Activated B cell treated with CpG ODN at 0.5 μM for 24 hours (primary cell): ENCODE measurements at regions of chr16 and their contacts with region 1.

Region 1: GRCh38 chr16:57413301-57413730 is 8.7 kb downstream of the CCL17 start:
- DNase-seq: peak; percentile 52
- ATAC-seq: peak; percentile 89
- H3K4me3 Mint-ChIP-seq: peak overlapping the region; percentile 69
- H3K27ac Mint-ChIP-seq: peak overlapping the region; percentile 81
- H3K4me1 Mint-ChIP-seq: peaks cover 68% of the 10 kb centered on the region
- H3K27me3 Mint-ChIP-seq: no peaks in the 10 kb centered on the region
- CTCF ChIP-seq: no peak

Region 2: DNA sequence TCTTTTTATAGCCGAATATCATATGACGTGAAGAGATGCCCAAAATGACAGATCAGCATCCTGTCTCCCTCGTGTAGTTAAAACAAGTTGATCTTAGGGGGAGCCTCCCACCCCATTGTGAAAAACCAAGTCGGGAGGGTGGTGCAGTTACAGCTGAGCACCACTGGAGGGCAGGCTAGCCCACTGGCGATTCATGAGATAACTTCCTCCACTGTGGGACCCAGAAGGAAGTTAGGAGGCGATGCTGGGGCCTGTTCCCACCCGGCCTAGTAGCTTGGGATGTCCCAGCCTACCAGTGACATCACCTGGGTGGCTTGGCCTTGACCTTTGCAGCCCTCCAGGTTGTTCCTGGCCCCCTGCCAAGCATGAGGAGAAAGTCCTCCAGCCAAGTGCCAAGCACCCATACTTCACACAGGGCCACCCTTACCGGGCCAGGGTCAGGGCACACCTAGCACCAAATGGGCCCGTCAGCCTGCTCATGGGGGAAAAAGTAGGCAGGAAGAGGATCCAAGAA is 329.0 kb before region 1 on chr16:
- CTCF ChIA-PET with region 1: no interaction called
- POLR2A ChIA-PET with region 1: no interaction called
- intact Hi-C with region 1: loop called (anchors 2 kb)
- DNase-seq: peak; percentile 50
- ATAC-seq: peak; percentile 89
- H3K4me3 Mint-ChIP-seq: no peak overlapping the region
- H3K27ac Mint-ChIP-seq: peak overlapping the region; percentile 57
- H3K4me1 Mint-ChIP-seq: peaks cover 8% of the 10 kb centered on the region
- H3K27me3 Mint-ChIP-seq: no peaks in the 10 kb centered on the region
- CTCF ChIP-seq: peak; percentile 77

Region 3: DNA sequence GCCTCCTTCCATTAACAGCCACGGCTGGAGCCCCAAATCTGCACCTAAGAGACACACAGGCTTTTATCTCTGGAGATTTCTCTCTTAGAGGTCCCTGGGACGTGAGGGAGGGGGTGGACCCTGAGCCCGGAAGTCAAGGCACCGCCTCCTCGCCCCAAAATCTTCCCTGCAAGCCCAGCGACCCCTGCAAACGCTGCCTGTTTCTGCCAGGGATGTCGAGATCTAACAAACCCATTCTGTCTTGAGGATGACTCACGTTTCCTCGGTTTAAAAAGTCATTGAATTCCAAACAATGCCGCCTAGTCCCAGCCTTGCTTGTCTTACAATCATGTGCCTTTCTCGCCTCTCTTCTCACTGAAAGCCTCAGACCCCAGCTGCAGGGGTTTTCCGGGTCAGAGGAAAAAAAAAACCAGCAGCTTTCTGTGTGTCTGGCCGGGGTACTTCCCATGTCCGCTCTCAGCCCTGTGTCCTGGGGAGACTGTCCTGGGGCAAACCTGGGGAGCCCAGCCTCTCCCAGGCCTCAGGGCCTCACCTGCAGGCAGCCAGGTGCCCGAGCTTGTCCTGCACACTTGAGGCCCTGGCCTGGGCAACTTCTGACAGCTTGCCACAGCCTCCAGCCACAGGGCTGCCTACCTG is 152.9 kb before region 1 on chr16:
- CTCF ChIA-PET with region 1: no interaction called
- POLR2A ChIA-PET with region 1: no interaction called
- intact Hi-C with region 1: no loop called
- DNase-seq: no peak
- ATAC-seq: peak; percentile 52
- H3K4me3 Mint-ChIP-seq: peak overlapping the region; percentile 48
- H3K27ac Mint-ChIP-seq: peak overlapping the region; percentile 46
- H3K4me1 Mint-ChIP-seq: peaks cover 11% of the 10 kb centered on the region
- H3K27me3 Mint-ChIP-seq: no peaks in the 10 kb centered on the region
- CTCF ChIP-seq: no peak

Region 4: GRCh38 chr16:57325458-57325857 is 87.9 kb before region 1 on chr16:
- CTCF ChIA-PET with region 1: no interaction called
- POLR2A ChIA-PET with region 1: no interaction called
- intact Hi-C with region 1: no loop called
- DNase-seq: no peak
- ATAC-seq: no peak
- H3K4me3 Mint-ChIP-seq: no peak overlapping the region
- H3K27ac Mint-ChIP-seq: peak overlapping the region; percentile 38
- H3K4me1 Mint-ChIP-seq: peaks cover 12% of the 10 kb centered on the region
- H3K27me3 Mint-ChIP-seq: no peaks in the 10 kb centered on the region
- CTCF ChIP-seq: no peak

Region 5: GRCh38 chr16:57349212-57350031 is 63.9 kb before region 1 on chr16:
- CTCF ChIA-PET with region 1: interaction called, 13 read pairs
- POLR2A ChIA-PET with region 1: interaction called, 7 read pairs
- intact Hi-C with region 1: loop called (anchors 1 kb)
- DNase-seq: peak; percentile 51
- ATAC-seq: peak; percentile 99
- H3K4me3 Mint-ChIP-seq: peak overlapping the region; percentile 62
- H3K27ac Mint-ChIP-seq: peak overlapping the region; percentile 31
- H3K4me1 Mint-ChIP-seq: peaks cover 43% of the 10 kb centered on the region
- H3K27me3 Mint-ChIP-seq: peaks cover 8% of the 10 kb centered on the region
- CTCF ChIP-seq: no peak

Region 6: DNA sequence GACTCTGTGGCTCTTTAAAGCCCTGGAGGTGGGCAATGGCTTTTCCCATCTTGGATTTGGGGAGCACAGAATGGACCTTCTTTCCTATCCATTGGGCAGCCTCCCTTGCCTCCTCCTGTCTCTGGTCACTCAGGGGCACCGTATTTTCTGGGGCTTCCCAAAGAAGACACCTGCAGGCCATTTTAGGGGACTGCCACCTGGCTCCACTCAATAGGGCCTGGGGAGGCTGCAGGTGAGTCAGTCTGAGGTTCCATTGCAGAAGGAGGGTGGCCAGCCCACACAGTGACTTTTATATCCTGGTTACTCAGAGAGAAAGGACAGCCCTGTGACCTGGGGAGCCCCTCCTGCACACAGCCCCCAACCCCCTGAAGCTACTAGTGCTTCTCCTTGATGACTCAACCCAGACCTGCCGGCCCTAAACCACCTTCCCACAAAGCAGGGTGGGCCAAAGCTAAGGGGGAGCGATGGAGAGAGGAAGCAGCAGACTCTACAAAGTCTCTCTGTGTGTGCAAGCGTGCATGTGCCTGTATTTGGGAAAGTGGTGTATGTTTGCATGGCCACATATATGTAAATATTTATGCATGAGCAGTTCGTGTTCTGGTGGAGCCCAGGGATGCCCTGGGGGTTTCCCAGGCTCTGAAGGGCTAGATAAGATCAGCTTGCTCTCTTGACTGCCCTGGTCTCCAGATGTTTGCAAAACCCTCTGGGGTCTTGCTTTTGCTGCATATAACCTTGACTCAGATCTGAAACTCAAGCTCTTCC is 36.1 kb before region 1 on chr16:
- CTCF ChIA-PET with region 1: interaction called, 14 read pairs
- POLR2A ChIA-PET with region 1: interaction called, 18 read pairs
- intact Hi-C with region 1: loop called (anchors 1 kb)
- DNase-seq: peak; percentile 46
- ATAC-seq: peak; percentile 82
- H3K4me3 Mint-ChIP-seq: peak overlapping the region; percentile 29
- H3K27ac Mint-ChIP-seq: peak overlapping the region; percentile 86
- H3K4me1 Mint-ChIP-seq: peaks cover 43% of the 10 kb centered on the region
- H3K27me3 Mint-ChIP-seq: no peaks in the 10 kb centered on the region
- CTCF ChIP-seq: no peak

Region 7: DNA sequence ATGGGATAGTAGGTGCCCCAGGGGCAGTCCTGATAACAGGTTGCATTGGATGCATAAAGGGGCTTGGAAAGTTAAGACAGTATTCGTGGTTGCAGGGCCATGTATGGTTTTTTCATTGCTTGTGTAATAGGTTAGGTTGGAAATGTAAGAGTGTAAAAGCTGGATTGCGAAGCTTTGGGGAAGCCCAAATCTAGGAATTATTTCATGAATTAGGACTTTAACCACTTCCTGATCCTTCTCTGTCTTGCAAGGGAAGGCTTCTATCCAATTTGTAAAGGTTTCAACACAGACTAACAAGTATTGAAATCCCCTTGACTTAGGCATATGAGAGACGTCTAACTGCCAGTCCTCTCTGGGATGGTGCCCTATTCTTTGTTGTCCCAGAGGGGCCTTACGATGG is 16.5 kb before region 1 on chr16:
- CTCF ChIA-PET with region 1: interaction called, 9 read pairs
- POLR2A ChIA-PET with region 1: interaction called, 20 read pairs
- intact Hi-C with region 1: loop called (anchors 1 kb)
- DNase-seq: no peak
- ATAC-seq: no peak
- H3K4me3 Mint-ChIP-seq: no peak overlapping the region
- H3K27ac Mint-ChIP-seq: no peak overlapping the region
- H3K4me1 Mint-ChIP-seq: peaks cover 32% of the 10 kb centered on the region
- H3K27me3 Mint-ChIP-seq: no peaks in the 10 kb centered on the region
- CTCF ChIP-seq: no peak

Region 8: GRCh38 chr16:57628008-57628781 is 214.9 kb after region 1 on chr16 and contains the start of gene ADGRG1:
- CTCF ChIA-PET with region 1: no interaction called
- POLR2A ChIA-PET with region 1: no interaction called
- intact Hi-C with region 1: no loop called
- DNase-seq: no peak
- ATAC-seq: peak; percentile 52
- H3K4me3 Mint-ChIP-seq: no peak within 1 kb of the TSS
- H3K27ac Mint-ChIP-seq: no peak within 1 kb of the TSS
- H3K4me1 Mint-ChIP-seq: peaks cover 4% of the 10 kb centered on the region
- H3K27me3 Mint-ChIP-seq: peaks cover 42% of the 10 kb centered on the region
- CTCF ChIP-seq: no peak
- total RNA-seq, gene ADGRG1: 0.13 and 0.15 TPM in 2 replicates